Activated T-helper 2 cell treated with anti-CD3 and anti-CD28 coated beads, Interferon-gamma antibody, Interleukin-2, Interleukin-4, amounts not matched to agents 10 μg/mL and 5 μg/mL and 100 μg/mL, durations not matched to agents 14 hours and 24 hours and 36 hours (primary cell): ENCODE measurements at regions of chr13 and their contacts with region 1.

Region 1: GRCh38 chr13:97221989-97222700 is at the start of gene MBNL2:
- DNase-seq: peak; percentile 82
- H3K4me3 Mint-ChIP-seq: peak within 1 kb of the TSS; percentile 91
- H3K27ac Mint-ChIP-seq: peak within 1 kb of the TSS; percentile 87
- H3K4me1 Mint-ChIP-seq: peaks cover 46% of the 10 kb centered on the region
- H3K27me3 Mint-ChIP-seq: no peaks in the 10 kb centered on the region
- total RNA-seq, gene MBNL2: 27.2 and 28.4 TPM in 2 replicates

Region 2: GRCh38 chr13:95676762-95677563 is 1545.2 kb before region 1 on chr13 and contains the start of gene DNAJC3:
- intact Hi-C with region 1: loop called (anchors 10 kb)
- DNase-seq: peak; percentile 98
- H3K4me3 Mint-ChIP-seq: peak within 1 kb of the TSS; percentile 95
- H3K27ac Mint-ChIP-seq: peak within 1 kb of the TSS; percentile 80
- H3K4me1 Mint-ChIP-seq: peaks cover 45% of the 10 kb centered on the region
- H3K27me3 Mint-ChIP-seq: no peaks in the 10 kb centered on the region
- total RNA-seq, gene DNAJC3: 28.1 and 28.6 TPM in 2 replicates

Region 3: DNA sequence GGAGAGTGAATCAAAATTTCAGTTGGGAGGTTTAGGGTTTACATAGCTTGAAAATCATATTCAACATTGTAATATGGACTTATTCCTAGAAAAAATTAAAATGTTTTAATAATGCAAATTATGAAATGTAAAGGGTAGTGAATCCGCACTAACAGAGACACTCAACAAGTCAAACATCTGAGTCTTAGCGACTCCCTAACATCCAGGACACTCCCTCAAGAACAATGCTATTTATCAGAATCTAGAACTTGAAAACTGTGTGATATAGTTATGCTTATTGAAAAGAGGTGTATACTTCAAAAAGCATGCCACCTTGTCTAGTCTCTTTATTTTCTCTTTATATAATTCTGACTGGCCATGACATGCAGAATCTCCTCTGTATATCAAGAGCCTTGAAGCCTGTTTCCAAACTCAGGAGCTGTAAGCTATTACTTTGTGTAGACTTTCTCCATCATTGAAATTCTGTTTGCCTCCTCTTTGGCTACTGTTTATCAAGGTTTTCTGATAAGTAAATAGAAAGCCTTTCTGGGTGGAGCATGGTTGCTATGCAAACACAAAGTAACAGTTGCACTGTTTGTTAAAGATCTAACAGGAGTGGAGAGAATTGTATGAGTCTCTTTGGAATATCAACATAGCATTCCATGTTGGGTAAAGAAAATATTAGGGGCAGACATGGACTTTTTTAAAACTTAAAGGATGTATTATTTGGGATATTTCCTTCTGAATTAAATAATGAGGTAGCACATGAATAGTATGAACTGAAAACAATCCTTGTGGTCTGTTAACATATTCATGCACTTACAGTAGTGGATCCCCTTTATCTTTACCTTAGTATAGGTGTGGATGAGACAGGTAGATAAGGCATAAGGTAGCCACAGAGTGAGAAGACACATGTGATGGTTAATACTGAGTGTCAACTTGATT is 56.4 kb before region 1 on chr13:
- intact Hi-C with region 1: no loop called
- DNase-seq: no peak
- H3K4me3 Mint-ChIP-seq: no peak overlapping the region
- H3K27ac Mint-ChIP-seq: no peak overlapping the region
- H3K4me1 Mint-ChIP-seq: no peaks in the 10 kb centered on the region
- H3K27me3 Mint-ChIP-seq: peaks cover 26% of the 10 kb centered on the region

Region 4: GRCh38 chr13:97205982-97206381 is 16.2 kb before region 1 on chr13:
- intact Hi-C with region 1: loop called (anchors 1 kb)
- DNase-seq: no peak
- H3K4me3 Mint-ChIP-seq: no peak overlapping the region
- H3K27ac Mint-ChIP-seq: no peak overlapping the region
- H3K4me1 Mint-ChIP-seq: peaks cover 22% of the 10 kb centered on the region
- H3K27me3 Mint-ChIP-seq: peaks cover 10% of the 10 kb centered on the region

Region 5: DNA sequence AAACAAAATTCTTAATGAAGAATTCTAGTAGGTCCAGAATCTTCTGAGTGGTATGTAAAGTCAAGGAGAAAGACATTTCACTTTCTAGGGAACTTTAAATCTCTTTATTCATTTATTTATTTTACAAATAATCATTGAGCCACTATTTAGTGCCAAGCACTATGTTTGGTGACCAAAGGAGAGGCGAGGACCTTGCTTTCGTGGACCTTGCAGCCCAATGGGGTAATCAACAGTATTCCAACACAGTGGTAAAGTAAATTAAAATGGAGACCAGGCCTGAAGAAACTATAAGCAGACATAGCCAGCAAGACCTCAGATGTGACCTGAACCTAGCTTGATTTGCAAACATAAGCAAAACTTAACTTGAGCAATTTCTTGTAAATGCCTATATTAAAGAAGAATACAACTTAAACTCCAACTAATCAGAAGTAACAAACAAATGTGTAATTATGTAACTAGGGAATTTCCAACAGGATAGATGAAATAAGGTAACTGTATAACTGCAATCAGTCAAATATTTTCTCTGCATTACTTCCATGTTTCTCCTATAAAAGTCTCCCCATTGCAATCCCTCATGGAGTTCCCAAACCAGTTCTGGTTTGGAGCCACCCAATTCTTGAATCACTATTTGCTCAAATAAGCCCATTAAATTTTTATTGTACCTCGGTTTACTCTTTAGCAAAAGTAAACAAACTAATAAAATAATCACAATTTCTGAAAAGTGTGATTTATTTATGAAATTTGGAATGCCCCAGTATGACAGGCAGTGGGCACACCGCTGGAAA is 67.6 kb after region 1 on chr13:
- intact Hi-C with region 1: loop called (anchors 2 kb)
- DNase-seq: no peak
- H3K4me3 Mint-ChIP-seq: no peak overlapping the region
- H3K27ac Mint-ChIP-seq: no peak overlapping the region
- H3K4me1 Mint-ChIP-seq: peaks cover 30% of the 10 kb centered on the region
- H3K27me3 Mint-ChIP-seq: no peaks in the 10 kb centered on the region

Region 6: DNA sequence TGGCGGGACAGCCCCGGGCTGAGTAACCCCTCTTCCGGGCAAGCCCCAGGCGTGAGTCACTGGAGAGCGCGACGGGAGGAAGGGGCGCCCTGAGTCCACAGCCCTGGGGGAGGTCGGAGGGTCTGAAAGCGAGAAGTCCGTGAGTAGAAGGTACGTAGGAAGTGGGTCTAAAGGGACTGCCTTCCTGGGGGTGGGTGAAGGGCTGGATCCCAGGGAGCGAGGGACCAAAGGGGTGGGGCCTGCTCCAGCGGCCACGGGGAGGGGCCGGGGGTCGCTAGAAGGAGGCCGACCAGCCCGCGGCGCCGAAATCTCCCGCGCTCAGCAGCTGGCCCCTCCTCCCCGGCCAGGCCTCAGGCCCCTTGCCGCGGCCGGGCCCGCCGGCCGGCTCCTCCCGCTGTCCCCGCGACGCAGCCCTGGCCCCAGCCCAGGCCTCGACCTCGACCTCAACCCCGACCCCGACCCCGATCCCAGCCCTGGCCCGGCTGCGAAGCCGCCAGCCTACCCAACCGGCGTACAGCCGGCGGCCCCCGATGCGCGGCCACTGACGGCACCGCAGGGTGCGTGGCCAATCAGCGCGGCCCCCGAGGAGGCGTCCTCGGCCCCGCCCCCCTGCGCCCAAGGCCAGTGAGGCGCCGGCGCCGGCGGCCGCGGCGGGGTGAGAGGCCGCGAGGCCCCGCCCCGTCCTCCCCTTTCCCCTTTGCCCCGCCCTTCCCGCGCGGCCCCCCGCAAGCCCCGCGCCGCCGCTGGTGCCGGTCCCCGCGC is 753.9 kb after region 1 on chr13:
- intact Hi-C with region 1: loop called (anchors 5 kb)
- DNase-seq: peak; percentile 87
- H3K4me3 Mint-ChIP-seq: peak overlapping the region; percentile 91
- H3K27ac Mint-ChIP-seq: peak overlapping the region; percentile 99
- H3K4me1 Mint-ChIP-seq: peaks cover 27% of the 10 kb centered on the region
- H3K27me3 Mint-ChIP-seq: peaks cover 7% of the 10 kb centered on the region